ENCODE measurements at regions of chr5 and their contacts with region 1.

Region 1: DNA sequence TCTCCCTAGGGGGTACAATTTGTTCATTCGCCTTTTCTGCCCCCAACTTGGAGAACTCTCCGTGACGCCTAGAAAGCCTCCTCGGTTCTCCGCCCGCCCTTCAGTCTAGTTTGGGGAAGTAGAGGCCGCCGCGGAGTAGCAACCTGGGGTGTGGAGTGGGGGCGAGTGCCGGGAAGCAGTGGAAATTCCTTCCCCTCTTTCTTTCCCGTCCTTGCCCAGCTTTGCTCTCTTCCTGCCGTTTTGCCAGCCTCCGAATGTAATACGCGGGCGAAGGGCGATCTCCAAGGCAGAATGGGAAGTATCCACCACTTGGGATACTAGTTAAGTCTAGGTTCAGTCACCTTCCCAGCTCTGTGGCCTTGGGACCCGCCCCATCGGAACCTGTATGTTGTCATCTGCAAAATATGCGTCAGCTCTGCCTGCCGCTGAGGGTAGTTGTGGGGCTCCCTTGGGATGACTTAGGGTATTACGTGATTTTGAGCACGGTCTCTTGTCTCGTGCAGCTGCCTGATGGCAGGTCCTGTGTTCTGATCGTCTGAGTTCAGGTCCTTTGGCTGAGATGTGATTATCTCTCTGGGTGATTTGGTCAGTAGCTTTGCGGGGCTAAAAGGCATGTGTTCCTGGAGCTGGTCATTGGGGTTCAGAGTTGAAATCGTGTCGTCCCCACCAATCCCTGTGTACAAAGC is 724 bp downstream of the PAM start:
- DNase-seq: peak; percentile 70 to 91
- H3K4me3 ChIP-seq: peak overlapping the region; percentile 86 to 96
- H3K27ac ChIP-seq: peak overlapping the region; percentile 95 to 96
- H3K4me1 ChIP-seq: peaks cover 5 to 23% of the 10 kb centered on the region in 2 donors
- H3K27me3 ChIP-seq: no peaks in the 10 kb centered on the region
- CTCF ChIP-seq: no peak

Region 2: DNA sequence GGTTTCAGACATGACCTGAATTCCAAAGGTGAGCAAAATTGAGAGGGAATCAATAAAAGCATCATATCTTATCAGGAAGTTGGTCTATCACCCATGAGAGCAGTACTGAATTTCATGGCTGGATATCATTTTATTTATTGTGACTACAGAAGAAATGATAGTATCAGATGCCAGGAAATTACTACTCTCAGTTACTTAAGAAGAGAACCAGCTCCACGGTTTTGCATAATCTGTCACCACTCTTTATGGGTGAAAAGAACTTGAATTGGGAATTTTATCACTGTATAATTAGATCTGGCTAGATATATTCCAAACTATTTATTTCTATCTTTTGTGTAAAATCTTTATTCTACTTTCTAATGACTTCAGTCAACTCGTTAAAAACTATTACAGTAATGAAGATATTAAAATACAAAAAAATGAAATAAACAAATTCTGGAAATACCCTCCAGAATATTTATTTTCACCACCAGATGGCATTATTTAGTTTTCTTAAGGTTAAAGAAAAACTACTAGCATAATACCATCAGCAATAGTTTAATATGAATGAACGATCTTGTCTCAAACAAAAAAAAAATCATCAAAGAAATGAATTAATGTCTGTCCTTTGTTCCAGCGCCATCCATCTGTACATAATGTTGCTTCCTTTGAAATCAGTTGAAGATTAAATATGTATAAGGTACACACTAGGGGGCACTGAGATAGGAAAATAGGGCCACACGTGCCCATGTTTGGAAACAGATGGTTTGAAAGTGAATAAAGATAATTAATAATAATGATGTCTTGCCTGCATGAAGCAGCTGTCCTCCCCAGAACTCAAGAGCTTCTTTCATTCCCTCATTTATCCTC is 172.3 kb before region 1 on chr5:
- intact Hi-C with region 1: loop called (anchors 10 kb)
- DNase-seq: no peak
- H3K4me3 ChIP-seq: no peak overlapping the region
- H3K27ac ChIP-seq: no peak overlapping the region
- H3K4me1 ChIP-seq: peaks cover 0 to 3% of the 10 kb centered on the region in 2 donors
- H3K27me3 ChIP-seq: no peaks in the 10 kb centered on the region
- CTCF ChIP-seq: peak; percentile 15 to 58 (median 42)

Region 3: GRCh38 chr5:102681407-102681983 is 74.3 kb before region 1 on chr5:
- intact Hi-C with region 1: loop called (anchors 5 kb)
- DNase-seq: peak in 1 of 2 donors; percentile 79
- H3K4me3 ChIP-seq: no peak overlapping the region
- H3K27ac ChIP-seq: no peak overlapping the region
- H3K4me1 ChIP-seq: peaks cover 0 to 2% of the 10 kb centered on the region in 2 donors
- H3K27me3 ChIP-seq: no peaks in the 10 kb centered on the region
- CTCF ChIP-seq: peak; percentile 57 to 75 (median 68)

Region 4: DNA sequence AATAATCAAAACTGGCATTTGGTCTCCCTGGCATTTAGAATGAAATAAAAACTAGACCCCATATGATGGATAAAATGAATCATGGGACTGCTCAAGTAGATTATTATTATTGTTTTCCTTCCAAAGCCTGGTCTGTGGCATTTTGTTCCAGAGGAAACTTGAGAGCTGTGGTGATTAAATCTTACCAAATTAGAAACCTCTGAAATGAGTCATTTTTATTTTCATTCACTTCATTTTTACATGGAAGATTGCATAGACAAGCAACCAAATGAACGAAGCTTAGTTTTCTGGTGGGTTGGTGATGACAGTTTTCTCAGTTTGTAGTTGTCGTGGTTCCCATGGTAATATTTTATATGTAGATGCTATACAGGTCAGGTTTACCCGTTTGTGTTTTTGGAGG is 22.6 kb after region 1 on chr5:
- intact Hi-C with region 1: loop called (anchors 2 kb)
- DNase-seq: no peak
- H3K4me3 ChIP-seq: no peak overlapping the region
- H3K27ac ChIP-seq: peak overlapping the region; percentile 63 to 69
- H3K4me1 ChIP-seq: peaks cover 11 to 47% of the 10 kb centered on the region in 2 donors
- H3K27me3 ChIP-seq: no peaks in the 10 kb centered on the region
- CTCF ChIP-seq: no peak

Region 5: DNA sequence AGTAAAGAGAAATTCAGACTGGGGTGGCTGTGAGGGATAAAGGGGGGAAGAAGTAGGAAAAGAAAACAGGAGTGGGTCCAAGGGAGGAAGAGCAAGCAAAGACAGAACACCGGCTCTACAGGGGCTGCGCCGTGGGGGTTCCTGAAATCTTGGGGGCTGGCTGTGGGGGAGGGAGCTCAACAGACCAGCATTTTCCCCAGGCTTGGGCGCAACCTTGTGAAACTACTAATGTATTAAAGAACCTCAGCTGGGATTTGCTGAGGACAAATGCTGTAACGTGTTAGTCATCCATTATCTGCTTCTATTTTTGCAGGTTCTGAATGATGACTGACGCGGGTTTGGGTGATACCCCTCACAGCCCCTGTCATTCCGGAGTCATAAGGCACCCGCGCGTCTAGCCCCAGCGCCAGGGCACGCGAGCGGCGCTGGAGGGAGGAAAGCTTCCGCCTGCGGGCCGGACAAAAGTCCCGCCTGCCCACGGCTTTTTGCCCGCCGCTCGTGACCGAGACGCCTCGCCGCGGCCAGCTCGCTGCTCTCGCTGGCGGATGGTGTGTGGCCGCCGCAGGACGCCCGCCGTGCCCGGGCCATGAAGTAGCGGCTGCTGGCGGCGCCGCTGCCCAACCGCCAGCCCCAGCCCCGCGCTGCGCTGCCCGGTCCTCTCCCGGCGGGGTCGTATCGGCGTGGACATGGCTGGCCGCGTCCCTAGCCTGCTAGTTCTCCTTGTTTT is 109.8 kb after region 1 on chr5:
- intact Hi-C with region 1: loop called (anchors 1 kb)
- DNase-seq: peak; percentile 34 to 85
- H3K4me3 ChIP-seq: peak overlapping the region; percentile 71 to 73
- H3K27ac ChIP-seq: peak overlapping the region; percentile 92 to 96
- H3K4me1 ChIP-seq: peaks cover 0 to 37% of the 10 kb centered on the region in 2 donors
- H3K27me3 ChIP-seq: no peaks in the 10 kb centered on the region
- CTCF ChIP-seq: no peak

Region 6: DNA sequence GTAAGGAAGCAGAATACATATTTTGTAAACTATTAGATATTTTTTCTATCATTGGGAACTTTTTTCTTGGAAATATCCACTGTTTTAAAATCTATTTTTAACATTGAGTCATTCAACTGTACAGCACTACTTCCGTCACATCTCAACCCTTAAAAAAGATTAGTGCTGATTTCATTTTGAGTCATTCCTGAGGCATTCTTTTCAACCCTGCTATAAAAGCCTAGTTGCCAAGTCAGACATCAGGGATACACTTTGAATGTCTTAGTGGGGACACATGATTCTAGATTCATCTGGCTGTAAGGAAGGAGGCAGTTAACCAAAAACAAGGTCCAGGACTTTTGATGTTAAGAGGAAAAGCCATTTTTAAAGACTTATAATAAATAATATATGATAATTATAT is 203.2 kb after region 1 on chr5:
- intact Hi-C with region 1: loop called (anchors 5 kb)
- DNase-seq: no peak
- H3K4me3 ChIP-seq: no peak overlapping the region
- H3K27ac ChIP-seq: peak overlapping the region; percentile 64 to 76
- H3K4me1 ChIP-seq: peaks cover 0 to 29% of the 10 kb centered on the region in 2 donors
- H3K27me3 ChIP-seq: no peaks in the 10 kb centered on the region
- CTCF ChIP-seq: no peak

Region 7: DNA sequence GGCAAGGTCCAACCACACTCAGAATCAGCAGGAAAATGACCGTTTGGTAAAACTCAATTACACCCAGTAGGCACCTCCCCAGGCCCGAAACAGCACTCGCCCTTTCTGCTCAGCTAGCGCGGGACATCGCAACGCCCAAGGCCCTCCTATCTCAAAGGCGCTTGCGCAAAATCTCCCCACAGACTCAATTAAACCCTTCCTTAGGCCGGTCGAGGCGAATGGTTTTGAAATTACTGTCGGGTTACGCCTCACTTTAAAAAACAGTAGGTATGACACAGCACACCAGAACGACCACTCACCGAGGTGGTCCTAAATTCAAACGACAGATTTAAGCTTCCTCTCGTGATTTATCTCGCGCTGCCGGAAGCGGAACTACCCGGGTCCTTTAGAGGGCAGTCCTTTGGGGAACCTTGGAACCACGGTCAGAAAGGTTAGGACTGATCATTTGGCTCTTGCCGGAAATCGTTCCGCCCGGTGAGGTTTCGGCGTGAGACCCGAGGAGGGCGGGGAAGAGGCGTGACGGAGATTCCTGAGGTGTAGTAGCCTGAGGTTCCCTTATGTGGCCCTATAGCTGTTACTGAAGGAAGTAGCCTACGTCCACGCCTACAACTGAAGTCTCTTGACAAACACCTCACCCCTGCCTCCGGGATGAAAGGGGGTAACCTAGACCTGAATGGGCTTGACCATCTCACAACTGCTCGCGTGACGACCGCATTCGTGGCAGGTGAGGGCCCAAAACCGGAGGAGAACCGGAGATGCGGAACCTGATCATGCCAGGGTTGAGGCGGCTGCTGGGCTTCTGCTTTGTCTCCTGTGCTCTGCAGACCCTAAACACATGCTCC is 364.2 kb after region 1 on chr5 and contains the starts of genes GIN1 and PPIP5K2:
- intact Hi-C with region 1: loop called (anchors 1 kb)
- DNase-seq: peak; percentile 90 to 98
- H3K4me3 ChIP-seq: peak within 1 kb of the TSS; percentile 84 to 92
- H3K27ac ChIP-seq: peak within 1 kb of the TSS; percentile 89 to 93
- H3K4me1 ChIP-seq: peaks cover 0 to 18% of the 10 kb centered on the region in 2 donors
- H3K27me3 ChIP-seq: no peaks in the 10 kb centered on the region
- CTCF ChIP-seq: no peak
- total RNA-seq, gene GIN1: 0.21 TPM
- total RNA-seq, gene PPIP5K2: 33.2 TPM

Measured in ascending aorta (tissue), 2 donors.